ENCODE measurements at regions of chr9 and their contacts with region 1.

Region 1: GRCh38 chr9:17810728-17811571 is 232.1 kb downstream of the SH3GL2 start:
- DNase-seq: peak; percentile 23
- H3K4me3 ChIP-seq: no peak overlapping the region
- H3K27ac ChIP-seq: no peak overlapping the region
- H3K27me3 ChIP-seq: peaks cover 3% of the 10 kb centered on the region
- CTCF ChIP-seq: peak; percentile 92

Region 2: DNA sequence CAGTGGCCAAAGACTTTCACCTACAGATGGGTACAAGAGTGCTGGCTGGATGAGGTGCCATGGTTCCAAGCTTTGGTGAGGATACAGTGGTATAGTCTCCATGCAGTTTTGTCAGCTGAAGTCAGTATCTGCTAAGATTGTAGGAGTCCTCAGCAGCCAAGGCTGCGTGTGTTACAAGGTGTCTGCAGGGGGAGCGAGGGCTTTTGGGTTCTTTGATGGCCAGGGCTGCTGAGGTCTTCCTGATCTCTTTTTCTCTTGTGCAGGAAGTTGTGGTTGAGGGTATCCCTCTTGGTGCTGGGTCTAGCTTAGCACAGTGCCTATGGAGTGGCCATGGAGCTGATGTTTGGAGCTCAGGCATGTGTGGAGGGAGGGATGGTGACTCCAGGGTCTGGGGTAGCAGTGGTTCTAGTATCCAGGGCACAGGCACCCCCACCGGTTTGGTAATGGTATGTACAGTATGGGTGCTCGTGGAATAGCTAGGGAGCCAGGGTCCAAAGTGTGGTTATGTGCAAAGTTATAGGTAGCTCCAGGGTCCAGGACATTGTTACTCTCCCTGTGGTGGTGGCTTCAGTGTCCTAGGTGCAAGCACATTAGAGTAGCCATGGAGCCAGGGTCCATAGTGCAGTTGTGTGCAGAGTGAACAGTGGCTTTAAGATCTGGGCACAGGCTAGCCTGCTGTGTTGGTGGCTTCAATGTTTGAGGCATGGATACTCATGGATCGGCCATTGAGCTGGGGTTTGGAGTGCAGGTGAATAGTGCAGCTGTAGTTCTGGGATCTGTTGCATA is 639.4 kb before region 1 on chr9:
- CTCF ChIA-PET with region 1: no interaction called
- POLR2A ChIA-PET with region 1: no interaction called
- DNase-seq: no peak
- H3K4me3 ChIP-seq: no peak overlapping the region
- H3K27ac ChIP-seq: no peak overlapping the region
- H3K27me3 ChIP-seq: no peaks in the 10 kb centered on the region
- CTCF ChIP-seq: no peak

Region 3: GRCh38 chr9:17519761-17520160 is 291.2 kb before region 1 on chr9:
- CTCF ChIA-PET with region 1: interaction called, 19 read pairs
- POLR2A ChIA-PET with region 1: no interaction called
- DNase-seq: no peak
- H3K4me3 ChIP-seq: no peak overlapping the region
- H3K27ac ChIP-seq: no peak overlapping the region
- H3K27me3 ChIP-seq: no peaks in the 10 kb centered on the region
- CTCF ChIP-seq: no peak

Region 4: DNA sequence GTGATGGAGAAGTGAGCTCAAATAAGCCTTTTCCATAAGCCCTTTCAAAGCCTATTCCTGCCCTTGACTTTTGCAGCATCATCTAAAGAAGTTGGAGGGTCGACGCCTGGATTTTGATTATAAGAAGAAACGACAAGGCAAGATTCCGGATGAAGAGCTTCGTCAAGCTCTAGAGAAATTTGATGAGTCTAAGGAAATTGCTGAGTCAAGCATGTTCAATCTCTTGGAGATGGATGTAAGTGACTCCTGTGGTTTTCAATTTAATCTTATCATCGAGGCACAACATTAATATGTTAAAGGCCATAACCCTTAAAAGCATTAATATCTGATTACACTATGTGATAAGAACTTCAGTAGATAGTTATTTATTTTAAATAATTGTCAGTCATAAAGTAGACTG is 21.6 kb before region 1 on chr9:
- CTCF ChIA-PET with region 1: interaction called, 33 read pairs
- POLR2A ChIA-PET with region 1: no interaction called
- DNase-seq: no peak
- H3K4me3 ChIP-seq: no peak overlapping the region
- H3K27ac ChIP-seq: no peak overlapping the region
- H3K27me3 ChIP-seq: peaks cover 2% of the 10 kb centered on the region
- CTCF ChIP-seq: no peak

Region 5: GRCh38 chr9:17824191-17824590 is 13.2 kb after region 1 on chr9:
- CTCF ChIA-PET with region 1: interaction called, 45 read pairs
- POLR2A ChIA-PET with region 1: no interaction called
- DNase-seq: no peak
- H3K4me3 ChIP-seq: no peak overlapping the region
- H3K27ac ChIP-seq: no peak overlapping the region
- H3K27me3 ChIP-seq: no peaks in the 10 kb centered on the region
- CTCF ChIP-seq: no peak

Region 6: DNA sequence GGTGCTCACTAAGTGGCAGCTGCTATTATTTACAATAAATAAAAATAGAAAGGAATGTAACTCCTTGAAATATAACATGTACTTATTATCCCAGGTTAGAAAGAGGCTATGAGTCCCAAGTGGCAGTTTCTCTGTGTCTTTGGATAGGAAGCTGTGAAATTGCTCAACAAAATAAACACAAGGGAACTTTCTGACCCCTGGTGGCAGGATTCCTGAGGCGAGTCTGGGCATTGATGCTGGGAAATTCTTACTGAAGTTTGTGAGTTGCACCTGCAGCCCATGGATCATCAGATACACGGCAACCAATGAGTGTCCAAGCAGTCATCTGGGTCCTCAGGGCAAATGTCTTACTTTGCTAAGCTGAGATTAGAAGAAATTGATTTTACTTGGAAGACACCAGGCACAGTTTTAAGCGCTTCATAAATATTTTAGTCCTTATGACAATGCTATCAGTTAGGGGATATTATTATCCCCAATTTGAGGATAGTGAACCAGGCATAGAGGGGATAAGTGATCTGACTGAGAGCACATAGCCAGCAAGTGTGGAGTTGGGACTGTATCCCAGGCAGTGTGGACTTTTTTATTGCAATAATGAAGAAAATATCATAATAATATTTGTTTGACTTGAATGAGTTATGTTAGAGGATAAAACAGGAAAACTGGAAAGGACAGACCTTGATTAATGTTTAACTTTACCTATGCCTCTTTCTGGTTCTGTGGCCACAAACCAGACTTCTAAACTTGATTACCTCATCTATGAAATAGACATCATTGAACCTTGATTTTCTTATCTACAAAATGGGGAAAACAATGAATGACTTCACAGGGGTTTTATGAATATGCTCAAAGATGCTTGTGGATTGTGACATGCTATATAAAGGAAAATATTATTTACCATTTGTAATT is 397.5 kb after region 1 on chr9:
- CTCF ChIA-PET with region 1: interaction called, 183 read pairs
- POLR2A ChIA-PET with region 1: interaction called, 3 read pairs
- DNase-seq: no peak
- H3K4me3 ChIP-seq: no peak overlapping the region
- H3K27ac ChIP-seq: no peak overlapping the region
- H3K27me3 ChIP-seq: no peaks in the 10 kb centered on the region
- CTCF ChIP-seq: peak; percentile 48

Region 7: GRCh38 chr9:19464764-19465585 is 1654.0 kb after region 1 on chr9:
- CTCF ChIA-PET with region 1: interaction called, 10 read pairs
- POLR2A ChIA-PET with region 1: no interaction called
- DNase-seq: peak; percentile 61
- H3K4me3 ChIP-seq: peak overlapping the region; percentile 49
- H3K27ac ChIP-seq: no peak overlapping the region
- H3K27me3 ChIP-seq: peaks cover 4% of the 10 kb centered on the region
- CTCF ChIP-seq: peak; percentile 60